ENCODE measurements at regions of chr12 and their contacts with region 1.

Region 1: GRCh38 chr12:57005980-57006808 is at the start of gene ZBTB39:
- DNase-seq: peak; percentile 35
- ATAC-seq: peak; percentile 80
- H3K4me3 ChIP-seq: peak within 1 kb of the TSS; percentile 98
- H3K27ac ChIP-seq: peak within 1 kb of the TSS; percentile 76
- H3K4me1 ChIP-seq: peaks cover 12% of the 10 kb centered on the region
- H3K27me3 ChIP-seq: no peaks in the 10 kb centered on the region
- CTCF ChIP-seq: peak; percentile 65
- POLR2A ChIP-seq: peak; percentile 46; the same call in 1 of the 2 replicates
- RAD21 ChIP-seq: no peak
- total RNA-seq, gene ZBTB39: 5.2 and 5.3 TPM in 2 replicates

Region 2: DNA sequence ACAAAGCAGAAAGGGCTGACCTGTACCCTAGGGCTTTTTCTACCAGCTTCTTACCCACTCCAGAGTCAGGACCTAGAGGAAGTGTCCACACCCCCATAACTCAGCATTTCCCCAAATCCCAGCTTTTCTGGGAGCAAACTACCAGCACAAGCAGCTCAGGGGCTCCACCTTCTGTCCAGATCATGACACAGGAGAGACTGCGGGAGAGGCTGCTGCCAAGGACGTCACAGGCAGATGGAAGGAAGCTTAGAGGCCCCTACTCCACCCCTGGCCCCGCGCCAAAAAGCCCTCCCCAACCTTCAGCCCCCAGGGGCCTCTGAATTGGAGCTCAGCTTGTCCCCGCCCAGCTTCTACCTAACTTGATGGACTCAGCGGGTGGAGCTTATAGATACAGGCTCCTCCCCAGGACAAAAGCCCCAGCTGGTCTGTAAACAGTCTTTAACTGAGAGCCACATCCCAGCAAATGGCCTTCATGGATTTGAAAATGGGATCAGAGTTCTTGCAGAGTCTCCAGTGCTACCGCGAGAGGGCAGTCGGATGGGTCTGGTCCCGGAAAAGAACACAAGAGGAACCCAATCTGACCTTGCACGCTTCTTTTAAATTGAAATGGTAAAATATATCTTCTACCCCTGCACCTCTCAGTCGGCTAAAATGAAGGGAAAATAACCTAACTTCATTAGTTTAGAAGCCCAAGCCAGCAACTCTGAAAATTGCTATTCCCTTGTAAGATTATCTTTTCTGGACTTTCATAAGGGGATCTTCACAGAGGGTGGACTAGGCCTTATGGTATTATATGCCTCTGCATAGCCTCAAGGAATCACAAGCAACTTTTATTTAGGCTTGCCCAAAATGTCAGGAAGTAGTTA is 369.3 kb before region 1 on chr12:
- CTCF ChIA-PET with region 1: interaction called, 3 read pairs
- POLR2A ChIA-PET with region 1: no interaction called
- dilution Hi-C with region 1: no loop called
- in situ Hi-C with region 1: loop called (anchors 10 kb)
- intact Hi-C with region 1: loop called (anchors 10 kb)
- DNase-seq: peak; percentile 100
- ATAC-seq: peak; percentile 81
- H3K4me3 ChIP-seq: peak overlapping the region; percentile 69
- H3K27ac ChIP-seq: peak overlapping the region; percentile 84
- H3K4me1 ChIP-seq: peaks cover 10% of the 10 kb centered on the region
- H3K27me3 ChIP-seq: no peaks in the 10 kb centered on the region
- CTCF ChIP-seq: peak; percentile 82
- POLR2A ChIP-seq: no peak
- RAD21 ChIP-seq: peak; percentile 79

Region 3: GRCh38 chr12:56763753-56764657 is 242.2 kb before region 1 on chr12:
- CTCF ChIA-PET with region 1: interaction called, 7 read pairs
- POLR2A ChIA-PET with region 1: no interaction called
- dilution Hi-C with region 1: no loop called
- in situ Hi-C with region 1: no loop called
- intact Hi-C with region 1: loop called (anchors 2 kb)
- DNase-seq: peak; percentile 82
- ATAC-seq: peak; percentile 82
- H3K4me3 ChIP-seq: no peak overlapping the region
- H3K27ac ChIP-seq: peak overlapping the region; percentile 32
- H3K4me1 ChIP-seq: no peaks in the 10 kb centered on the region; the same call in 1 of the 2 replicates
- H3K27me3 ChIP-seq: no peaks in the 10 kb centered on the region
- CTCF ChIP-seq: no peak
- POLR2A ChIP-seq: no peak
- RAD21 ChIP-seq: no peak

Region 4: DNA sequence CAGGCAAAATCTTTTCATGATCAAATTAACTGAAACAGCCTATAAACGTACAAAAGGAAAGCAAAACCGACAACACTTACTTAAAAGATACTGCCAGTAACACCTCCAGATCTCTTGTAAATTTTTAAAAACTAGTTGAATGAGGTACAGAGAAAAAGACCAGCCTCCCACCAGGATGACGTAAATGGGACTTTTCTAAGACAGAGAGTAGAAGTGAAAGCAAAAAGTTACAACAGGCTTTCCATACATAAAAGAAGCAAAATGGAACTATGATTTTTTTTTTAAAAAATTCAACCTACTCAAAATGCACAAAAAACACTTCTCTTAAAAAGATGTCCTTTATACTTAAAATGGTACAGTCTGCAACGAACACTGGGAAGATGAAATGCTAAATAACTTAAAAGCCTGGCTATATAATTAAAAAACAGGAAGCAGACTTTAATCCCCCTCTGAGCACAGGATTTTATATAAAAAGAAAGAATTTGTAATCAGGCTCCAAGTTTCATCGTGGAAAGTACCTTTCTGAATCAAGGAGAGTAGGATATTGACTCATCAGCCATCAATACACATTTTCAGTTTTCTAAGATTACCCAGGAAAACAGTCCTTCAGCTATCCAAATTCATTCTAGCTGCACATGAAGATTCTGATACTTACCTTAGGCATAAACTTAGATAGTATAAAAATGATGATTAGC is 57.9 kb after region 1 on chr12:
- CTCF ChIA-PET with region 1: interaction called, 9 read pairs
- POLR2A ChIA-PET with region 1: no interaction called
- dilution Hi-C with region 1: no loop called
- in situ Hi-C with region 1: no loop called
- intact Hi-C with region 1: loop called (anchors 1 kb)
- DNase-seq: peak; percentile 41
- ATAC-seq: no peak
- H3K4me3 ChIP-seq: no peak overlapping the region
- H3K27ac ChIP-seq: no peak overlapping the region
- H3K4me1 ChIP-seq: no peaks in the 10 kb centered on the region
- H3K27me3 ChIP-seq: no peaks in the 10 kb centered on the region
- CTCF ChIP-seq: no peak
- POLR2A ChIP-seq: no peak
- RAD21 ChIP-seq: no peak

Region 5: GRCh38 chr12:57401165-57401564 is 395.0 kb after region 1 on chr12:
- CTCF ChIA-PET with region 1: no interaction called
- POLR2A ChIA-PET with region 1: interaction called, 18 read pairs
- dilution Hi-C with region 1: no loop called
- in situ Hi-C with region 1: no loop called
- intact Hi-C with region 1: no loop called
- DNase-seq: no peak
- ATAC-seq: no peak
- H3K4me3 ChIP-seq: no peak overlapping the region
- H3K27ac ChIP-seq: no peak overlapping the region
- H3K4me1 ChIP-seq: no peaks in the 10 kb centered on the region
- H3K27me3 ChIP-seq: no peaks in the 10 kb centered on the region
- CTCF ChIP-seq: no peak
- POLR2A ChIP-seq: no peak
- RAD21 ChIP-seq: no peak